ENCODE measurements at regions of chr5 and their contacts with region 1.

Region 1: GRCh38 chr5:136018814-136019783 is 9.7 kb upstream of the TGFBI start:
- DNase-seq: no peak
- ATAC-seq: no peak
- H3K4me3 ChIP-seq: no peak overlapping the region
- H3K27ac ChIP-seq: no peak overlapping the region
- H3K4me1 ChIP-seq: peaks cover 26 to 46% of the 10 kb centered on the region in 2 experiments
- H3K27me3 ChIP-seq: peaks cover 59% of the 10 kb centered on the region
- CTCF ChIP-seq: no peak
- POLR2A ChIP-seq: no peak
- RAD21 ChIP-seq: no peak

Region 2: GRCh38 chr5:135810188-135810943 is 208.7 kb before region 1 on chr5:
- CTCF ChIA-PET with region 1: no interaction called
- POLR2A ChIA-PET with region 1: no interaction called
- RAD21 ChIA-PET with region 1: no interaction called
- intact Hi-C with region 1: no loop called
- DNase-seq: no peak
- ATAC-seq: no peak
- H3K4me3 ChIP-seq: no peak overlapping the region
- H3K27ac ChIP-seq: no peak overlapping the region
- H3K4me1 ChIP-seq: no peaks in the 10 kb centered on the region
- H3K27me3 ChIP-seq: no peaks in the 10 kb centered on the region
- CTCF ChIP-seq: no peak
- POLR2A ChIP-seq: no peak
- RAD21 ChIP-seq: no peak

Region 3: GRCh38 chr5:136053336-136054141 is 34.4 kb after region 1 on chr5:
- CTCF ChIA-PET with region 1: no interaction called
- POLR2A ChIA-PET with region 1: no interaction called
- RAD21 ChIA-PET with region 1: interaction called in 1 of 2 experiments, 4 read pairs
- intact Hi-C with region 1: loop called (anchors 5 kb)
- DNase-seq: peak; percentile 76
- ATAC-seq: peak; percentile 90
- H3K4me3 ChIP-seq: peak overlapping the region in 1 of 2 experiments; percentile 33; a peak in 2 of 4 replicates
- H3K27ac ChIP-seq: peak overlapping the region; percentile 5; the same call in 1 of the 2 replicates
- H3K4me1 ChIP-seq: peaks cover 26 to 44% of the 10 kb centered on the region in 2 experiments
- H3K27me3 ChIP-seq: peaks cover 27% of the 10 kb centered on the region; the same call in 1 of the 2 replicates
- CTCF ChIP-seq: no peak
- POLR2A ChIP-seq: no peak
- RAD21 ChIP-seq: no peak